Tibial artery (tissue), 4 donors: ENCODE measurements at regions of chr15 and their contacts with region 1.

Region 1: DNA sequence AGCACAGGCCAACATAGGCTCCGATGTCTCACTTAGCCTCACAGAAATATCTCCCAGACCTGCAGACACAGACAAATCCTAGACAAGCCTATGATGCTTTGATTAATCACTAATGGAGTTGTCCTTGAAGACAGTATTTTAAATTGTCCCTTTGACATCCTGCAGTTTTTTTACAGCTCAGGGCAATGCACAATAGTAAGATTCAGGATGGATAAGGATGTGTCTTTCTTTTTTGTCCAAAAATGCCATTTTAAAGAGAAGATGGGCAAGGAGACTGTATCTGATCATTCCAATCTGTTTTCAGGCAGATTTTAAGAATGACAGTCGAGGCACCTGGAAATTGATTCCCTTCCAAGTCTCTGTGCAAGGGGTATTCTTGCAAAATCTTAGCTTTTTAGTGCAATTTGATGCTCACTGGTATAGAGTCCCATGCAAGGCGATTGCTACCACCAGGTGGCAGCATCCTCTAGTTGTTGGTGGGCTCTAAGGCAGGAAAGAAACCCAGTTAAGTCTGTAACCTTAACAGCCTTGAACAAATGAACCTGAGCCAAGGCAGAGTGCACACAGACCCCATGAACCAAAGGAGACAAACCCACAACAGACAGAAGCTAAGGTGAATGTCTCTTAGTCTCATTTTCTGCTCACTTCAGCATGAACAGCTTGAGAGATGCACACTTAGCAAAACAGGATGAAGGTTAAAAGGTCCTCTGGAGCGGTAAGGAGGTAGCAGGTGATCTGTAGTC is 51.2 kb upstream of the MINAR1 start:
- DNase-seq: peak; percentile 83 to 88
- H3K4me3 ChIP-seq: no peak overlapping the region
- H3K27ac ChIP-seq: no peak overlapping the region
- H3K4me1 ChIP-seq: no peaks in the 10 kb centered on the region
- H3K27me3 ChIP-seq: no peaks in the 10 kb centered on the region
- CTCF ChIP-seq: peak; percentile 84 to 87

Region 2: GRCh38 chr15:79853458-79854328 is 472.8 kb after region 1 on chr15:
- intact Hi-C with region 1: loop called (anchors 2 kb)
- DNase-seq: peak; percentile 50 to 73
- H3K4me3 ChIP-seq: no peak overlapping the region
- H3K27ac ChIP-seq: no peak overlapping the region
- H3K4me1 ChIP-seq: no peaks in the 10 kb centered on the region
- H3K27me3 ChIP-seq: no peaks in the 10 kb centered on the region
- CTCF ChIP-seq: peak; percentile 87 to 93